Activated CD4-positive, alpha-beta memory T cell treated with anti-CD3 and anti-CD28 coated beads for 36 hours (primary cell): ENCODE measurements at regions of chr14 and their contacts with region 1.

Region 1: DNA sequence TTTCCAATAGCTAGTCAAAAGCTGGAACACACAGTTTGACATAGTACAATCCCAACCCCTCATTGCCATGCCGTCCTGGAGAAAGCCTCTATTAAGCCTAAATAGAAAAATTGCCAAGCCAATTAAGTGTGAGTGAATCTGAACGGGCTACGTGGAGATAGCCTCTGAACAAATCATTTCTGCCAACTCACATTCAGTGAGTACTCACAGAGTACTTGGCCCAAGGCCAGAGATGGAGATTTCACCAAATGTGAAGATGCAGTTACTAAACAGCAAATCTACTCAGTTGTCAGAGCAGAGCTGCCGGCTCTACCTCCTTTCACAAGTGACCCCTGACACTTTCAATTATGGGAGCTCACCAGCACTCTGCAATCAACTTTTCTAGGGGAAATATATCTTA is 350.0 kb downstream of the GALC start:
- DNase-seq: no peak
- H3K4me3 Mint-ChIP-seq: no peak overlapping the region
- H3K27ac Mint-ChIP-seq: no peak overlapping the region
- H3K4me1 Mint-ChIP-seq: no peaks in the 10 kb centered on the region
- H3K27me3 Mint-ChIP-seq: no peaks in the 10 kb centered on the region

Region 2: GRCh38 chr14:87679866-87680265 is 36.9 kb after region 1 on chr14:
- CTCF ChIA-PET with region 1: no interaction called
- POLR2A ChIA-PET with region 1: no interaction called
- intact Hi-C with region 1: no loop called
- DNase-seq: no peak
- H3K4me3 Mint-ChIP-seq: no peak overlapping the region
- H3K27ac Mint-ChIP-seq: no peak overlapping the region
- H3K4me1 Mint-ChIP-seq: no peaks in the 10 kb centered on the region
- H3K27me3 Mint-ChIP-seq: no peaks in the 10 kb centered on the region

Region 3: DNA sequence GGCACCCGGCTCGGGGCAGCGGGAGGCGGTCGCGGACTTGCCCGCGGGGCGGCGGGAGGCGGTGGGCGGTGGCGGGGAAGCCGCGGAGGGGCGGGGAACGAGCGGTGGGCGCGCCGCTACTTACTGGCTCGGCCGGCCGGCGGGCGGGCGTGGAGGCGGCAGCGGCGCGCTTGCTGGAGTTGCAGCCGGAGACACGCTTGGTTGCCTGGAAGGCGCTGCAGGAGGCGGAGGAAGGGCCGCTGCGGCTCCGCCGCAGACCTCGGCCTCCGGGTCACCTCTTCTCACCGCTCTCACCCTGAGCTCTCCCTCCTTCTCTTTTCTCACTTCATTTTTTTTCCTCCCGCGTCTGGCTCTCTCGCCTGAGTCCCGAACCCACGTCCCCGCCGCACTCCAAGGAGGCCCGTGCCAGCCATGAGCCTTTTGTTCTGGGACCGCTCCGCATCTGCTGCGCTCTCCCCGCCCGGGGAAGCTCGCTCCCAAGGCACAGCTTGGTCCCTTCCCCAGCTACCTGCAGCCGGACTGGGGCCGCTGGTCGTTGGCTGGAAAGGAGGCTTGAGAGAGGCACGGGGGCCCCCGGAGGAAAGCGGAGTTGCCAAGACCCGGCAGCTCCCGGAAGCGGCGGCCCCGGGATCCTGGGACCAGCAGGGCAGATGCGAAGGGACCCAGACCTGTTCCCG is 680.7 kb after region 1 on chr14:
- CTCF ChIA-PET with region 1: no interaction called
- POLR2A ChIA-PET with region 1: no interaction called
- intact Hi-C with region 1: loop called (anchors 10 kb)
- DNase-seq: peak; percentile 17
- H3K4me3 Mint-ChIP-seq: peak overlapping the region; percentile 21
- H3K27ac Mint-ChIP-seq: no peak overlapping the region
- H3K4me1 Mint-ChIP-seq: peaks cover 8% of the 10 kb centered on the region
- H3K27me3 Mint-ChIP-seq: peaks cover 39% of the 10 kb centered on the region